SK-N-SH (cell line): ENCODE measurements at regions of chr5 and their contacts with region 1.

Region 1: DNA sequence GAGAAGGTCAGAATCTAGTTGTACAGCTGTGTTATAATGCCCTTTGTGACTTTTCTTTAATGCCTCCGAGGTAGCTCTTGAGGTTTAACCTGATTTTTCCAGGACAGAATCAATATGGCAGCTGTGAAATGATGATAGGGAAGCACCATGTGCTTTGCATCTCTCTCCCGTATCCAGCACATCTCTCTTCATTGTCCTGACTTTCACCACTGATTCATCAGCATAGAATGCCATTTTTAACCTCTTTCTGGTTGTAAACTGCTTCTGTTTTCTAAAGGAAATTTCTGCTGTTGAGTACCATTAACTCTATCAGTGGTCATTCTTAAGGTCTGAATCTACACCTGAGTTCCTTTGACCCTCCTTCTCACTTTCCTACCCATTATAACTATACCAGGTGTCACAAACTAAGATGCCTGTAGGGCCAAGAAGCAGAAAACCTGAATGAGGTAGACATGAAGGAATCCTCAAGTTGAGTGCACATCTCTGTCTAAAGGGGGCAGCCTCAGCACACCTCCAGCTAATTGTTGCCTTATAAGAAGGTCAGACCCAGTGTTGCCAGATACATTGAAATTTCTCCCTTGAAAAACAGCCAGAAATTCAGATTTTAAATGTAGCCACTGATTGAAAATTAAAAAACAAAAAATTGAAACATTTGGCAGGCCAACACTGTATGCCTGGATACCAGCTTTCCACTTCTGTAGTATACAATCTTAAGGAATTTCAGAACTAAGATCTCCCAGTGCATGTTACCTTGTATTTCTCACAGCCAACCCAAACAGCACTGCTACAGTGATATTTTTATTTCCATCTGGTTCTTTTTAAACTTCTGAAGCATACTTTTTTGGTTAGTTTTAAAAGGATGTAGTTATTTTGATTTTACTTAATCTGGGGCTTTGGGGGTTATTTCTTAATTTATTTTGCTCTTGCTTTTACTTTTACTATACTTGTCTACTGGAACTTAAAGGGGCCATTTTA is 35.8 kb upstream of the TLX3 start:
- DNase-seq: peak; percentile 58
- H3K4me3 ChIP-seq: no peak overlapping the region
- H3K27ac ChIP-seq: peak overlapping the region in 1 of 2 experiments; percentile 53; a peak in 2 of 4 replicates
- H3K4me1 ChIP-seq: peaks cover 4 to 16% of the 10 kb centered on the region in 2 experiments; a peak in 3 of 4 replicates
- H3K27me3 ChIP-seq: no peaks in the 10 kb centered on the region
- CTCF ChIP-seq: peak; percentile 67
- EP300 ChIP-seq: 0 out of 4 replicates have a peak, but pooled peaks of 1 of the 2 experiments have one; percentile 3
- RAD21 ChIP-seq: peak; percentile 87

Region 2: DNA sequence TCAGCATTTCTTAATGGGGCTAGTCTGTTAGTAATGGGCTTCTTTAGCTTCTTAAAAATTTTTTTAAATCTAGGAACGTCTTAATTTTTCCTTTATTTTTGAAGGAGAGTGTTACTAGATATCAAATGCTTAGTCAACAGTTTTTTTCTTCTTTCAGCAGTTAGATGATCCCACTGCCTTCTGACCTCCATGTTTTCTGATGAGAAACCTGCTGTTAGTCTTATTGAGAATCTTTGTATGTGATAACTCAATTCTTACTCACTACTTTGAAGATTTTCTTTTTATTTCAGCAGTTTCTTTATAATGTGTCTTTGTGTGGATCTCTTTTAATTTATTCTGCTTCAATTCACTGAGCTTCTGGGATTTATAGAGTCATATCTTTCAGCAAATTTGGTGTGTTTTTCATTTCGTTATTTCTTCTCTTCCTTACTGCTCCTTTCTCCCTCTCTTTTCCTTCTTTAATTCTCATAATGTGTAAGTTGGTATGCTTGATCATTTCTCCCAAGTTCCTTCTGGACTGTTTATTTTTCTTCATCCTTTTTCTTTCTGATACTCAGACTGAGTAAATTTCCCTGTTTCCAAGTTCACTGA is 205.6 kb before region 1 on chr5:
- CTCF ChIA-PET with region 1: no interaction called
- POLR2A ChIA-PET with region 1: no interaction called
- DNase-seq: no peak
- H3K4me3 ChIP-seq: no peak overlapping the region
- H3K27ac ChIP-seq: no peak overlapping the region
- H3K4me1 ChIP-seq: no peaks in the 10 kb centered on the region
- H3K27me3 ChIP-seq: no peaks in the 10 kb centered on the region
- CTCF ChIP-seq: no peak
- EP300 ChIP-seq: no peak
- RAD21 ChIP-seq: no peak

Region 3: GRCh38 chr5:171226105-171226754 is 47.1 kb before region 1 on chr5:
- CTCF ChIA-PET with region 1: interaction called, 10 read pairs
- POLR2A ChIA-PET with region 1: no interaction called
- DNase-seq: peak; percentile 11
- H3K4me3 ChIP-seq: no peak overlapping the region
- H3K27ac ChIP-seq: peak overlapping the region in 1 of 2 experiments; percentile 30; a peak in 1 of 4 replicates
- H3K4me1 ChIP-seq: peaks cover 0 to 7% of the 10 kb centered on the region in 2 experiments; a peak in 2 of 4 replicates
- H3K27me3 ChIP-seq: no peaks in the 10 kb centered on the region
- CTCF ChIP-seq: peak; percentile 40
- EP300 ChIP-seq: no peak
- RAD21 ChIP-seq: peak; percentile 60

Region 4: DNA sequence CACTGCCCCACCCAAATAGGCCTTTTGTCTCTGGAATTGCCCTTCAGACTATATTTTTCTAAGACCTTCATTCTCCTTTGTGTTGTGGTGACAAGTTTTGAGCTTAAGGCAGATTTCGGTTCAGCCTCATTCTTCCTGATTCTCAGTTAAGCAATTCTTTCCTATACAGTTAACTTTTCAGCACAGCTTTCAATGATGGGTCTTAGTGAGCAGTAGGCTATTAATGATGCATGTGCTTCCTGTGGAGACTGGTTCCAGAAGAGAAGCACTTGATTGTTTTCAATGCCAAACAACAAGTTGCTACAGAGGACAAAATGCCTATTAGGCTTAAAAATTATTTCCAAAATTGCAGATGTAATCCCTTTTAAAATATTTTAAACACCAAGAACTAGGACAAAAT is 11.9 kb before region 1 on chr5:
- CTCF ChIA-PET with region 1: interaction called, 13 read pairs
- POLR2A ChIA-PET with region 1: no interaction called
- DNase-seq: no peak
- H3K4me3 ChIP-seq: no peak overlapping the region
- H3K27ac ChIP-seq: no peak overlapping the region
- H3K4me1 ChIP-seq: no peaks in the 10 kb centered on the region
- H3K27me3 ChIP-seq: no peaks in the 10 kb centered on the region
- CTCF ChIP-seq: no peak
- EP300 ChIP-seq: no peak
- RAD21 ChIP-seq: no peak

Region 5: GRCh38 chr5:171283753-171284152 is 10.5 kb after region 1 on chr5:
- CTCF ChIA-PET with region 1: interaction called, 11 read pairs
- POLR2A ChIA-PET with region 1: no interaction called
- DNase-seq: no peak
- H3K4me3 ChIP-seq: no peak overlapping the region
- H3K27ac ChIP-seq: no peak overlapping the region
- H3K4me1 ChIP-seq: peaks cover 0 to 5% of the 10 kb centered on the region in 2 experiments; a peak in 2 of 4 replicates
- H3K27me3 ChIP-seq: no peaks in the 10 kb centered on the region
- CTCF ChIP-seq: no peak
- EP300 ChIP-seq: no peak
- RAD21 ChIP-seq: no peak